CD14-positive monocyte (primary cell): ENCODE measurements at regions of chr2 and their contacts with region 1.

Region 1: GRCh38 chr2:239401067-239401880 is 454 bp upstream of the HDAC4 start:
- DNase-seq: peak; percentile 98 to 99 (median 99)
- H3K4me3 ChIP-seq: peak overlapping the region; percentile 52 to 85 (median 79)
- H3K4me3 Mint-ChIP-seq: peak overlapping the region; percentile 79 to 88
- H3K27ac ChIP-seq: peak overlapping the region; percentile 99
- H3K27ac Mint-ChIP-seq: peak overlapping the region; percentile 95 to 99 (median 98)
- H3K4me1 ChIP-seq: peaks cover 14 to 36% of the 10 kb centered on the region in 2 donors
- H3K4me1 Mint-ChIP-seq: peaks cover 39% of the 10 kb centered on the region
- H3K27me3 ChIP-seq: no peaks in the 10 kb centered on the region
- H3K27me3 Mint-ChIP-seq: peaks cover 0 to 11% (median 0%) of the 10 kb centered on the region in 3 donors
- CTCF ChIP-seq: no peak

Region 2: DNA sequence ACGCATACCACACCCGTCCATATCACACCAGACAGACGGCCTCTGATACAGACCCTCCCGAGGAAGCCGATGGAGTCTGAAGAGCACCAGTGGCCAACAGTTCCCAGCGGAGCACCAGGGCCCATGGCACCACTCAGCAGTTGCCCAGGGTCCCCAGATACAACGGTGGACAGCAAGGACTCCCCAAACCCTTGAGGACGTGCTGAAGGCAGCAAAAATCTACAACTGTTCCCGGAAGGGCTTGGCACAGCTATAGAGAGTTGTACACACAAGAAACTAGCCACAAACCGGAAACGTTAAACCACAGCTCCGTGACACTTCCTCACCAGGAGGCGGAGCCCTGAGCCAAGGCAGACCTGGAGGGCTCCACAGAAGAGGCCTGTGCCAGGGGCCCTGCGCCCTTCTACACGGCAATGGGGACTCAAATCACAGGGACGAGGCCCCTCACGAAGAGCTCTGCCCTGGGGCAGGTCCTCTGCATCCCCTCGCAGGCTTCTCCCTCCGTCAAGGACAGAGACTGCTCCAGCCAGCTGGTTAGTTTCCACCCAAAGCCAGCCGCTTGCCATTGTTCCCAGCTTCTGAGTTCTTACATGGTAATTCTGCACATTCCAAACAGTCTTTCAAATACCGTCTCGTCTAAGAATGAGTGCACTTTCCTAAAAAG is 133.9 kb before region 1 on chr2:
- intact Hi-C with region 1: loop called (anchors 2 to 10 kb)
- DNase-seq: peak; percentile 88 to 97 (median 92)
- H3K4me3 ChIP-seq: peak overlapping the region; percentile 66 to 92 (median 71)
- H3K4me3 Mint-ChIP-seq: peak overlapping the region; percentile 92 to 96
- H3K27ac ChIP-seq: peak overlapping the region; percentile 90 to 99
- H3K27ac Mint-ChIP-seq: peak overlapping the region; percentile 97 to 100 (median 99)
- H3K4me1 ChIP-seq: peaks cover 82 to 97% of the 10 kb centered on the region in 2 donors
- H3K4me1 Mint-ChIP-seq: peaks cover 89% of the 10 kb centered on the region
- H3K27me3 ChIP-seq: no peaks in the 10 kb centered on the region
- H3K27me3 Mint-ChIP-seq: peaks cover 0 to 5% (median 3%) of the 10 kb centered on the region in 3 donors
- CTCF ChIP-seq: peak; percentile 68

Region 3: GRCh38 chr2:239275044-239275685 is 126.1 kb before region 1 on chr2:
- intact Hi-C with region 1: loop called in 1 of 2 experiments (anchors 10 kb)
- DNase-seq: peak; percentile 93 to 98 (median 94)
- H3K4me3 ChIP-seq: peak overlapping the region in 2 of 3 experiments; percentile 22 to 61
- H3K4me3 Mint-ChIP-seq: peak overlapping the region; percentile 80 to 81
- H3K27ac ChIP-seq: peak overlapping the region; percentile 83 to 93
- H3K27ac Mint-ChIP-seq: peak overlapping the region; percentile 88 to 99 (median 98)
- H3K4me1 ChIP-seq: peaks cover 64 to 89% of the 10 kb centered on the region in 2 donors
- H3K4me1 Mint-ChIP-seq: peaks cover 72% of the 10 kb centered on the region
- H3K27me3 ChIP-seq: no peaks in the 10 kb centered on the region
- H3K27me3 Mint-ChIP-seq: peaks cover 0 to 4% (median 0%) of the 10 kb centered on the region in 3 donors
- CTCF ChIP-seq: no peak

Region 4: GRCh38 chr2:239438995-239439755 is 37.9 kb after region 1 on chr2:
- intact Hi-C with region 1: loop called in 1 of 2 experiments (anchors 5 kb)
- DNase-seq: peak; percentile 30 to 63 (median 56)
- H3K4me3 ChIP-seq: peak overlapping the region in 1 of 3 experiments; percentile 17
- H3K4me3 Mint-ChIP-seq: peak overlapping the region; percentile 24 to 76
- H3K27ac ChIP-seq: peak overlapping the region; percentile 60
- H3K27ac Mint-ChIP-seq: peak overlapping the region; percentile 60 to 88 (median 84)
- H3K4me1 ChIP-seq: peaks cover 62 to 65% of the 10 kb centered on the region in 2 donors
- H3K4me1 Mint-ChIP-seq: peaks cover 69% of the 10 kb centered on the region
- H3K27me3 ChIP-seq: peaks cover 2 to 12% of the 10 kb centered on the region in 2 donors
- H3K27me3 Mint-ChIP-seq: peaks cover 15 to 27% (median 27%) of the 10 kb centered on the region in 3 donors
- CTCF ChIP-seq: no peak

Region 5: DNA sequence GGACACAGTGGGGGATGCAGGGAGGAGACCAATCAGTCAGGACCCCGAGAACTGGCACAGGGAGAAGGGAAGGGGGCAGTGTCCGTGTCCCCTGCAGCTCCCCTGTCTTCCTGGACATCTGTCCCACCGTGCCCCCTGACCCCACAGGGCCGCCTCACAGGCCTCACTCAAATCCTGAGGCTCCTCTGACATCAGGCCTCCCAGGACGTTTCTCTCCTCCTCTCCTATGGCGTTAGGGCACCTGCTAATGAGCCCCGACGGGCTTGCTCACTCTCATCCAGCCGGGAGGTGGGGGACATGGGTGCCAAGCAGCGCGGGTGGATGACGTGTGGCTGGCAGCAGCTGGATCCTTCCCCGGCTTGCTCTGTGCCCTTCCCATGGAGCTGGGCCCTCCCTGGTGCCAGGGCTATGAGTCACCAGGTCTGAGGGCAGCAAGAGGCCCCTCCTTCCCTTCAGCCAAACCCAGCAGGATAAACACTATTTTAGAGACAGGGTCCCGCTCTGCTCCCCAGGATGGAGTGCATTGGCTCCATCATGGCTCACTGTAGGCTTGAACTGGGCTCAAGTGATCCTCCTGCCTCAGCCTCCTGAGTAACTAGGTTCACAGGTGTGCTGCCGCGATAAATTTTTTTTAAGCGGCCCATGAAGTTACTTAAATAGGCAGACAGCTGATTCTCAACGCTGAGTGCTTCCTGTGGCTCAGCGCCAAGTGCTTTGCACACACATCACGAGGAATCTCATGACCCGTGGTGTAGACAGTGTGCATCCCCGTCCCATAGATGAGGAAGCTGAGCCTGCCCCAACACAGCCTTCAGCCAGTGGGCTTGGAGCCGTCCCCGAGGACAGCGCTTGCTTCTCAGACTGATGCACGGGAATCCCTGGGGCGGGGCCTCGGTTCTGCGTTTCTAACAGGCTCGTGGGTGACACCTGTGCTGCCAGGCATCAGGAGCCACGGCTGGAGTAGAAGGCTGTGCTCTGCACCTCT is 64.0 kb after region 1 on chr2:
- intact Hi-C with region 1: loop called in 1 of 2 experiments (anchors 5 kb)
- DNase-seq: peak; percentile 99
- H3K4me3 ChIP-seq: peak overlapping the region in 1 of 3 experiments; percentile 21
- H3K4me3 Mint-ChIP-seq: peak overlapping the region; percentile 41 to 77
- H3K27ac ChIP-seq: peak overlapping the region; percentile 87 to 97
- H3K27ac Mint-ChIP-seq: peak overlapping the region in 4 of 7 donors; percentile 97 to 99 (median 98)
- H3K4me1 ChIP-seq: peaks cover 38 to 39% of the 10 kb centered on the region in 2 donors
- H3K4me1 Mint-ChIP-seq: peaks cover 41% of the 10 kb centered on the region
- H3K27me3 ChIP-seq: no peaks in the 10 kb centered on the region
- H3K27me3 Mint-ChIP-seq: peaks cover 0 to 2% (median 2%) of the 10 kb centered on the region in 3 donors
- CTCF ChIP-seq: no peak

Region 6: DNA sequence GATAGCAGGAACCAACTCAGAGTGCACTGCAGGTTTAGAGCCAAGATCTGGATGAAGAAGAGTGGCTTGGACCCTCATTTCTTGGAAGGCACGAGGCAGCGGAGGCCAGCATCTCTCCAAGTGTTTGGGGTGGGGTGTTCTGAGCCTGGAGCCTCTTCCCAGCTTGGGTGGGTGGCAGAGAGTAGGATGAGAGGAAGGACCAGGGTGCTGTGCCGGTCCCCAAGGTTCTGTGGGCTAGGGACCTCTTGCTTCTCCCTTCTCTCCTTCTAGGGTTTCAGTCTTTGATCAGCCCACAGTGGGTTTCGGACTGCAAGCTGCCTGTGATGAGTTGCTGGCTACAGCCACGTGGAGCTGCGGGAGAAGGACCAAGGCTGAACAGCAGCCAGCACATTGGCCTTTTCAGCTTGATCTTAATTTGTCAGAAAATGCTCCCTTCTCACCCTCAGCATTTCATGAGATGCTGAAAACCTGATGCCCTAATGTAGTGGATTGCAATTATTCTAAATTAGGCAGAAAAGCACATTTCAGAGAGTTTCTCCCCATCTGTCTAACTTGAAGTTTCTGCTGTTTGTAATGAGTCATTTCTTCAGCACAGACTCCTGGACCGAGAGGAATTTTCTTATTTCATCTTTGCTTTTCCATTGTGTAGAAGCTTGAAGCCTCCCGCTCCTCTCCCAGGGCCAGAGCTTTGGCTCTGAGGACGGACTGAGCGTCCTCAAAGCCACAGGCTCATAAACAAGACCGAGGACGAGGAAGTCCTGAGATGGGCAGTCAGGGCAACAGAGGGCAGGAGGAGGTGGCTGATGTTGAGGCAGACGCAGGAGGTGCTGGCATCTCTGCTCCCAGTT is 98.7 kb after region 1 on chr2:
- intact Hi-C with region 1: loop called in 1 of 2 experiments (anchors 2 kb)
- DNase-seq: peak; percentile 62 to 70 (median 66)
- H3K4me3 ChIP-seq: peak overlapping the region in 1 of 3 experiments; percentile 57
- H3K4me3 Mint-ChIP-seq: peak overlapping the region; percentile 66 to 81
- H3K27ac ChIP-seq: peak overlapping the region; percentile 97 to 100
- H3K27ac Mint-ChIP-seq: peak overlapping the region; percentile 97 to 100 (median 99)
- H3K4me1 ChIP-seq: peaks cover 59 to 66% of the 10 kb centered on the region in 2 donors
- H3K4me1 Mint-ChIP-seq: peaks cover 67% of the 10 kb centered on the region
- H3K27me3 ChIP-seq: no peaks in the 10 kb centered on the region
- H3K27me3 Mint-ChIP-seq: peaks cover 0 to 4% (median 2%) of the 10 kb centered on the region in 3 donors
- CTCF ChIP-seq: no peak